HepG2 (cell line): ENCODE measurements at regions of chr17 and their contacts with region 1.

Region 1: GRCh38 chr17:36001862-36002603 is 680 bp upstream of the CCL15 start:
- DNase-seq: peak; percentile 96
- ATAC-seq: peak; percentile 76
- H3K4me3 ChIP-seq: peak overlapping the region; percentile 73 to 78 (median 76)
- H3K27ac ChIP-seq: peak overlapping the region; percentile 88
- H3K4me1 ChIP-seq: peaks cover 69% of the 10 kb centered on the region
- H3K27me3 ChIP-seq: no peaks in the 10 kb centered on the region; a peak in 1 of 5 replicates
- CTCF ChIP-seq: no peak
- EP300 ChIP-seq: 0 out of 4 replicates have a peak, but pooled peaks have one; percentile 36 to 62
- POLR2A ChIP-seq: peak; percentile 80 to 92
- RAD21 ChIP-seq: no peak

Region 2: DNA sequence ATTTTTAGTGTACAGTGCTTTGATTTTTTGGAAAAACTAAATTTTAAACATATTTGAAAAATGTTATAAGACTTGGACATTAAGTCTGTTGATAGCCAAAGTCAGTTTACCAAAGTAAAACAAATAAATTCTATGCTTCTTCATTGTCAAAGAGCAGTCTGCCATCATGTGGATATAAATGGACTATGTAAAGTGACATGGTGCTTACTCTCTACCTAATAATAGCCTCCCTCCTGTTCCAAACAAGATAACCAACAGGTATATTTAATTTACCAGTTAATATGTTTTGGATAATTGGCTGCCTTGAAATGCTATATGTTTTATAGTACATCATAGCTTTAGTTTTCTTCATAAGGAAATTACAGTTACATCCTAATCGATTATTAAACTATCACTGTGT is 176.8 kb before region 1 on chr17:
- CTCF ChIA-PET with region 1: no interaction called
- POLR2A ChIA-PET with region 1: no interaction called
- in situ Hi-C with region 1: no loop called
- intact Hi-C with region 1: loop called (anchors 5 kb)
- DNase-seq: no peak
- ATAC-seq: no peak
- H3K4me3 ChIP-seq: no peak overlapping the region
- H3K27ac ChIP-seq: no peak overlapping the region
- H3K4me1 ChIP-seq: no peaks in the 10 kb centered on the region
- H3K27me3 ChIP-seq: no peaks in the 10 kb centered on the region
- CTCF ChIP-seq: no peak
- EP300 ChIP-seq: no peak
- POLR2A ChIP-seq: no peak
- RAD21 ChIP-seq: no peak

Region 3: DNA sequence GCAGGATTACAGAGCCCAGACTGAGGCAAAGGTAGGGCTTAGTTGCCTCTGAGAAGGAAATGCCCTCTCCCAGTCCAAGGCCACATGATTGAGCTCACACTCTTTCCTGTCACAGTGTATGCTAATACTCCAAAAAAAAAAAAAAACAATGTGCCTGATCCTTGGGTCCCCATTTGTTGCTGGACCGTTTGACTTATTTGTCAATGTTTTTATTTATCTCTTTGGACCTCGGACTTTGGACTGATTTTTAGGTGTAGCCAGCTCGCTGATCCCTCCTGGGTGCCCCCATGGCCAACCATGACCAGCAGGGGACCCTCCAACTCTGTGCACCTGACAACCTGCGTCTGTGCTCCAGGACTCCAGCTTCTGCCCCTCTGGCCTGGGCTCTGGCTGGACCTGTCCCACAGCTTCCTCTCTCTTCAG is 20.1 kb before region 1 on chr17:
- CTCF ChIA-PET with region 1: interaction called, 4 read pairs
- POLR2A ChIA-PET with region 1: interaction called, 131 read pairs
- in situ Hi-C with region 1: no loop called
- intact Hi-C with region 1: no loop called
- DNase-seq: peak; percentile 75
- ATAC-seq: peak; percentile 86
- H3K4me3 ChIP-seq: peak overlapping the region in 1 of 3 experiments; percentile 65; a peak in 2 of 6 replicates
- H3K27ac ChIP-seq: peak overlapping the region; percentile 66
- H3K4me1 ChIP-seq: peaks cover 78% of the 10 kb centered on the region
- H3K27me3 ChIP-seq: no peaks in the 10 kb centered on the region; a peak in 1 of 5 replicates
- CTCF ChIP-seq: peak; percentile 87
- EP300 ChIP-seq: peak in 1 of 2 experiments; percentile 48; a peak in 1 of 4 replicates
- POLR2A ChIP-seq: no peak
- RAD21 ChIP-seq: peak; percentile 88

Region 4: GRCh38 chr17:35991075-35991474 is 11.0 kb before region 1 on chr17:
- CTCF ChIA-PET with region 1: no interaction called
- POLR2A ChIA-PET with region 1: interaction called, 27 read pairs
- in situ Hi-C with region 1: no loop called
- intact Hi-C with region 1: no loop called
- DNase-seq: peak; percentile 71
- ATAC-seq: peak; percentile 86
- H3K4me3 ChIP-seq: no peak overlapping the region
- H3K27ac ChIP-seq: peak overlapping the region; percentile 72
- H3K4me1 ChIP-seq: peaks cover 58% of the 10 kb centered on the region
- H3K27me3 ChIP-seq: no peaks in the 10 kb centered on the region
- CTCF ChIP-seq: no peak
- EP300 ChIP-seq: peak in 1 of 2 experiments; percentile 33; a peak in 2 of 4 replicates
- POLR2A ChIP-seq: no peak
- RAD21 ChIP-seq: no peak

Region 5: GRCh38 chr17:36034127-36034526 is 32.1 kb after region 1 on chr17:
- CTCF ChIA-PET with region 1: no interaction called
- POLR2A ChIA-PET with region 1: no interaction called
- in situ Hi-C with region 1: no loop called
- intact Hi-C with region 1: no loop called
- DNase-seq: no peak
- ATAC-seq: no peak
- H3K4me3 ChIP-seq: no peak overlapping the region
- H3K27ac ChIP-seq: no peak overlapping the region
- H3K4me1 ChIP-seq: no peaks in the 10 kb centered on the region
- H3K27me3 ChIP-seq: peaks cover 0 to 4% of the 10 kb centered on the region in 2 experiments; a peak in 1 of 5 replicates
- CTCF ChIP-seq: no peak
- EP300 ChIP-seq: no peak
- POLR2A ChIP-seq: no peak
- RAD21 ChIP-seq: no peak